ENCODE measurements at regions of chr10 and their contacts with region 1.

Region 1: GRCh38 chr10:11286261-11286852 is 268.7 kb downstream of the CELF2 start:
- DNase-seq: no peak
- H3K4me3 ChIP-seq: no peak overlapping the region
- H3K27ac ChIP-seq: no peak overlapping the region
- H3K4me1 ChIP-seq: no peaks in the 10 kb centered on the region
- H3K27me3 ChIP-seq: no peaks in the 10 kb centered on the region
- CTCF ChIP-seq: no peak
- POLR2A ChIP-seq: no peak

Region 2: DNA sequence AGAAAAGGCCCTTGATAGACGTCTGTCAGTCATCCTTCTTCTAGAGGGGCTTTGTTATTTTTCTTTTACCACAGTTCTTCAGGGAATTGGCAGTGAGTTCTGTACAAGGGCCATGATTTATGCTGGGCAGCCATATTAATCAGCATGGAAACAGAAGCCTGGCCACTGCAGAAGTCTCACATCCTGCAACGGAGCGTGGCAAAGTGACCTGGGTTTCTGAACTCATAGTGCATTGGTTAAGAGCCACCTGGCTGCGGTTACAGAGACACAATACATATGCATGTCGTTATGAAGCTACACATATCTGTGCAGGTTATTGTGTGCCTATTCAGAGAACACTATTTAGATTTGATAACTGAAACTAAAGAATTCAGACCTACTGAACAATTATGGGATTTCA is 688.1 kb before region 1 on chr10:
- intact Hi-C with region 1: no loop called
- DNase-seq: no peak
- H3K4me3 ChIP-seq: no peak overlapping the region
- H3K27ac ChIP-seq: no peak overlapping the region
- H3K4me1 ChIP-seq: no peaks in the 10 kb centered on the region
- H3K27me3 ChIP-seq: no peaks in the 10 kb centered on the region
- CTCF ChIP-seq: no peak
- POLR2A ChIP-seq: no peak

Region 3: GRCh38 chr10:11213137-11213536 is 73.2 kb before region 1 on chr10:
- intact Hi-C with region 1: loop called (anchors 2 kb)
- DNase-seq: no peak
- H3K4me3 ChIP-seq: no peak overlapping the region
- H3K27ac ChIP-seq: no peak overlapping the region
- H3K4me1 ChIP-seq: no peaks in the 10 kb centered on the region
- H3K27me3 ChIP-seq: no peaks in the 10 kb centered on the region
- CTCF ChIP-seq: no peak
- POLR2A ChIP-seq: no peak

Measured in breast epithelium (tissue), 4 donors.